Cardiac septum (tissue), 1 donor: ENCODE measurements at regions of chr3 and their contacts with region 1.

Region 1: DNA sequence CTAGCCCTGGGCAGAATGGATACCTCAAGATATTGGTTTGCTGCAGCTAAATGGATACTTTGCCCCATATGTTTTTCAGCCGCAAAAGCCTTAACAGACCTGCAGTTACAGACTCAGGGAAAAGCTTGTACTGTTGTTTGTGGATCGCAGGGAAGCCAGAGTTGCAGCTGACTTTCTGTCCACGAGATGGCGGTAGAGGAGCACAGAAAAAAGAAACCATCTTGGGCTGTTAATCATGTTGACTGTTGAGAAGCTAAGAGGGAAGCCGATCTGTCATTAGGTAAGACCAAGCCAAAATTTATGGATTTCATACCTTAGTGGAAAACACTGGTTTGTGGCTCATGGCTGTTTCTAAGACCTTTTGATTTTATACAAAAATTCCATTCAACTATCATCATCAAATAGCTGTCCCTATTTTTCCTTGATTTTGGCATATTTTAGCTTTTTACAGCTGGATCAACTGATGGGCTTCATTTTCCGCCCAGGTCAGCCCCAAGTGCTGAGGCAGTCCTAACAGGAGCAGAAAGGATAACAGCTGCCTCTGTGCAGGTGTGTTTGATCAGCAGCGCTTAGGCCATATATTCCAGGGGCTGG is 205.7 kb upstream of the ZPLD1 start:
- DNase-seq: peak; percentile 81

Region 2: GRCh38 chr3:101703169-101703568 is 526.0 kb before region 1 on chr3:
- intact Hi-C with region 1: loop called (anchors 10 kb)
- DNase-seq: no peak

Region 3: GRCh38 chr3:101809178-101810021 is 419.8 kb before region 1 on chr3:
- intact Hi-C with region 1: loop called (anchors 2 kb)
- DNase-seq: no peak

Region 4: DNA sequence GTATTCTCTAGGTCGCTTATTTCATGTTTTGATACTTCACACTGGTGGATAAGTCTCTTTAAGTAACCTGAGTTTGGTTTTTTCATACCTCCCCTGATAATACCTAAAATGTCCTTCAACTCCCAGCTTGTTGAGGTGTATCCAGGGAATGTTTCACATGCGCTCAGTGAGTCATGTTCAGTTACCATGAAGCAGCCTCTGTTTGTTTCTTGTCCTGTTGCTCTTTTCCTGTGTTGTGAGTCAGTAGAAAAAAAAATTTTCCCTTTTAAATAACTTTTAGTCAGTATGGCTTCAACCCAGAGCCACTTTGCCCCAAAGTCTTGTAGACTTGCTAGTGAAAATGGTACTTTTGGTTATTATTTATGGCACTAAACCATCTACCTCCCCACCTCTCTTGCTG is 72.7 kb before region 1 on chr3:
- intact Hi-C with region 1: no loop called
- DNase-seq: no peak

Region 5: GRCh38 chr3:102336130-102336529 is 107.0 kb after region 1 on chr3:
- intact Hi-C with region 1: no loop called
- DNase-seq: no peak

Region 6: GRCh38 chr3:102536456-102536855 is 307.3 kb after region 1 on chr3:
- intact Hi-C with region 1: loop called (anchors 2 kb)
- DNase-seq: no peak